ENCODE measurements at regions of chr2 and their contacts with region 1.

Region 1: DNA sequence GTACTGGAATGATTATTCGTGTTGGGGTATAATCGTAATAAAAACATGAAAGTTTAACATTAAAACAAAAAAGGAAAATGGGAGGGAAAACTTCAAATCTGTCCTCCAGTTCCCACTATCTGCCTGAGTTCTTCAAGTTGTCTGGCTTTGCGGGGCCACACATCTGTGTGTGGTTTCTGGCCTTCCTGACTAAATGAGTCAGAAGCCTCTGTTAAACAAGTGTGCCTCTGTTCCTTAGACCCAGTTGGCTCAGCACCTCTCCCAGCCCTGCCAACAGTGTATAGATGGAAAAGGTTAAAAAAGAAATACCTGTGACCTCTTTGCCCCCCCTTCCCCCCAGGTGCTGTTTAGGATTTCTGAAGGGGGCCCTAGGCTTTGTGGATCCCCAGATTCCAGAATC is 30.2 kb downstream of the XDH start:
- DNase-seq: peak; percentile 89
- ATAC-seq: peak; percentile 94
- H3K4me3 ChIP-seq: peak overlapping the region; percentile 48
- H3K27ac ChIP-seq: peak overlapping the region; percentile 97
- H3K4me1 ChIP-seq: peaks cover 40% of the 10 kb centered on the region
- H3K27me3 ChIP-seq: no peaks in the 10 kb centered on the region
- CTCF ChIP-seq: no peak

Region 2: GRCh38 chr2:31302940-31303563 is 81.3 kb before region 1 on chr2:
- CTCF ChIA-PET with region 1: no interaction called
- POLR2A ChIA-PET with region 1: no interaction called
- intact Hi-C with region 1: no loop called
- DNase-seq: no peak
- ATAC-seq: no peak
- H3K4me3 ChIP-seq: no peak overlapping the region
- H3K27ac ChIP-seq: no peak overlapping the region
- H3K4me1 ChIP-seq: no peaks in the 10 kb centered on the region
- H3K27me3 ChIP-seq: no peaks in the 10 kb centered on the region
- CTCF ChIP-seq: no peak

Region 3: GRCh38 chr2:31413862-31414550 is 29.7 kb after region 1 on chr2:
- CTCF ChIA-PET with region 1: no interaction called
- POLR2A ChIA-PET with region 1: no interaction called
- intact Hi-C with region 1: loop called (anchors 2 kb)
- DNase-seq: peak; percentile 39
- ATAC-seq: no peak
- H3K4me3 ChIP-seq: no peak overlapping the region
- H3K27ac ChIP-seq: peak overlapping the region; percentile 12; the same call in 1 of the 2 replicates
- H3K4me1 ChIP-seq: peaks cover 34% of the 10 kb centered on the region
- H3K27me3 ChIP-seq: no peaks in the 10 kb centered on the region
- CTCF ChIP-seq: peak; percentile 53; the same call in 1 of the 2 replicates

Region 4: DNA sequence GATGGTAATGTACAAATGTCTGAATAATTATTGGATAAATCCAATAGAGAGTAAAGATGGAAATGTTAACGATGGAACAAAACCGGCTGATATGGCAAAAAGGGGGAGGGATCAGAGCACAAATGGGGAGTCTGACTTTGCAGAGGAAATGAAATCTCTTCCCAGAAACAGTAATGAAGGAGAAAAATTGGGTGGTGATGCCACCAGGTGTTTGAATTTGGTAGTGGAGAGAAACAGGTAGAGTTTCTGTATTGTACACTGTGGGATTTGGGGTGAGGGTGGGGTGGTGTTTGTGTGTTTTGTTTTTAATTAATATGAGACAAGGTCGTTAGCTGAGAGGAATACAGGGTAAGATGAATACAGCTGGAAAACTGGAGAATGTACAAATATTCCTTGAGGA is 50.6 kb after region 1 on chr2:
- CTCF ChIA-PET with region 1: no interaction called
- POLR2A ChIA-PET with region 1: no interaction called
- intact Hi-C with region 1: loop called (anchors 5 kb)
- DNase-seq: peak; percentile 52
- ATAC-seq: peak; percentile 56
- H3K4me3 ChIP-seq: no peak overlapping the region
- H3K27ac ChIP-seq: no peak overlapping the region
- H3K4me1 ChIP-seq: peaks cover 12% of the 10 kb centered on the region
- H3K27me3 ChIP-seq: no peaks in the 10 kb centered on the region
- CTCF ChIP-seq: peak; percentile 73

Region 5: DNA sequence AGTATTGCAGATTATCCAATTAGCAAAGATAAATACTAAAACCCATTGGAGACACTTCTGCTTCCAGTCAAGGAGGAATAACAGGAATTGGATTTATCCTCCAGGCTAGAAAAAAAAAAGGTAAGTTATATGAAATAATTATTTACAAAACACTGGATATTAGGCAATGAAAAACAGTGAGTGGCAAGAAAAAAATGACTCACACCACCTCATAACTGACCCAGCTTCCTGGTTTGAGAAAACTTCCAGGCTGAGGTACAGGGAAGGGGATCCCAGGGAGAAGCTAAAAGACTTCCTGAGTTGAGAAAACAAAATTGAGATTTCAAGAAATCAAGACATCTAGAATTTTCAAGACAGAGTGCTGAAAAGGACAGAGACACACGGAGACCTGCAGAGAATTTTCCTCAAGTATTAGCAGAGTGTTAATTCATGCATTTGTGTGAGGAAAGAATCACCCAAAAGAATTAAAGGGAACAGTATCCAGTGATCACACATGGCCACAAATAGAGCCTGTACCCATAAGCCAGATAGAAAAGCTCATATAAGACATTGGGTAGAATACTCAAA is 179.0 kb after region 1 on chr2:
- CTCF ChIA-PET with region 1: no interaction called
- POLR2A ChIA-PET with region 1: no interaction called
- intact Hi-C with region 1: no loop called
- DNase-seq: peak; percentile 53
- ATAC-seq: no peak
- H3K4me3 ChIP-seq: no peak overlapping the region
- H3K27ac ChIP-seq: no peak overlapping the region
- H3K4me1 ChIP-seq: peaks cover 17% of the 10 kb centered on the region
- H3K27me3 ChIP-seq: no peaks in the 10 kb centered on the region
- CTCF ChIP-seq: no peak

Measured in PC-3 (cell line).